OCI-LY7 (cell line): ENCODE measurements at regions of chr17 and their contacts with region 1.

Region 1: DNA sequence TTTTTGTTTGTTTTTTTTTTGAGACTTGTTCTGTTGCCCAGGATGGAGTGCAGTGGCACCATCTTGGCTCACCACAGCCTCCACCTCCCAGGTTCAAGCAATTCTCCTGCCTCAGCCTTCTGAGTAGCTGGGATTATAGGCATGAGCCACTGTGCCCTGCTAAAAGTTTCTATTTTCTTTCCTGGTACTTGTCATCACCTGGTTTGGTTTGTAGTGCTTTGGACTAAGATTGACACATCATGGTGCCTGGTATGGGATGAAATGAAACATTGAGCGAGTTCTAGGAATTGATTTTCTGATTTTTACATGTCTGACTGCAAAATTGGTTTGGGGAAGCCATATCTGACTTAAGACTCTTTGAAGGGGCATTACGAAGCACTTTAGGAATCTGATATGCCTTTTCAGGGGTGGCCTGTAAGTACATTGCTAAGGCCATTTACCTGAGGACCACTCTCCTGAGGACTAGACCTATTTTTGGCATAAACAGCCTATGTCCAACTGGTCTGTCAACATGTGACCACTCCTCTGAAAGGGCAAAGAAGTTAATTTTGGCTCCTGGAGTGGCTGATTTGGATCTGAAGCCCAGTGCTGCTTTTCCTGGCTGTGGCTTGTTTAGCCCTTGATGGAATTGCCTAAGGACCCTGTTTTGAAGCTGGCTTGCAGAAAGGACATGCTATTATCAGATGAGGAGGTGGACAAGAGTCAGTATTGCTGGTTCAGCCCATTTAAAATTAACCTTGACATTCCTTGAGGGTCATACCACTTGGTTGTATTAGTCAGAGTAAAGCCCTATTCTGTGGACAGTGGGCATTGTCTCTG is 18.4 kb upstream of the TBKBP1 start:
- DNase-seq: no peak
- H3K4me3 ChIP-seq: no peak overlapping the region
- H3K27ac ChIP-seq: no peak overlapping the region
- H3K4me1 ChIP-seq: no peaks in the 10 kb centered on the region
- CTCF ChIP-seq: no peak

Region 2: DNA sequence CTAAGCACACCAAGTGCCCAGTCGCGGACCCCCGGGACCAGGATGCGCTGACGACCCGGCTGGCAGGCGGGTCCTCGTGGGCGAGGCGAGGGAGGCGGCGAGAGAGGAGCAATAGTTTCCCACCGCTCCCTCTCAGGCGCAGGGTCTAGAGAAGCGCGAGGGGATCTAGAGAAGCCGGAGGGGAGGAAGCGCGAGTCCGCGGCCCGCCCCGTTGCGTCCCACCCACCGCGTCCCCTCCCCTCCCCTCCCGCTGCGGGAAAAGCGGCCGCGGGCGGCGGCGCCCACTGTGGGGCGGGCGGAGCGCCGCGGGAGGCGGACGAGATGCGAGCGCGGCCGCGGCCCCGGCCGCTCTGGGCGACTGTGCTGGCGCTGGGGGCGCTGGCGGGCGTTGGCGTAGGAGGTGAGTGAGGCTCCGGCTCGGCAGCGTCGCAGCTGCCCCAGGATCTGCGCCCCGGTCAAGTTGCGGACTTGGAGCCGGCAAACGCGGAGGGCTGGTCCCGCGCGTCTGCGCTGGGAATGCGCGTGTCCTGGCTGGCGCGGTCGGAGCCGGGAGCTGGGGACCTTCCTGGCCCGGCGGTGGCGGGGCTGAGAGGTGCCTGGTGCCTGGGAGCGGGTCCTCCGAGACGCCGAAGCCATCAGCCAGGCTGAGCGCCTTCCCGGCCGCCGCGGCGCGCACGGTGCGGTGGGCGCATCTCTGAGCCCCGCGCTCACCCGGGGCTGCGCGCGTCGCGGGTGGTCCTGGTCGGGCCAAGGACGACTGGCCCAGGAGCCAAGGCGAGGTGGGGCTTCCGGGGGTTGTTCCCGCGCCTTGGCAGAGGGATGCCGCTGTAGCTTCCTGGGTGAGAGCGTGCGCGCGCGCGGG is 421.8 kb before region 1 on chr17 and contains the start of gene ITGB3:
- CTCF ChIA-PET with region 1: no interaction called
- POLR2A ChIA-PET with region 1: interaction called, 11 read pairs
- intact Hi-C with region 1: no loop called
- DNase-seq: peak; percentile 81
- H3K4me3 ChIP-seq: peak within 1 kb of the TSS; percentile 69
- H3K27ac ChIP-seq: no peak within 1 kb of the TSS
- H3K4me1 ChIP-seq: peaks cover 9% of the 10 kb centered on the region
- CTCF ChIP-seq: peak; percentile 68
- total RNA-seq, gene ITGB3: not detected in 2 replicates

Region 3: DNA sequence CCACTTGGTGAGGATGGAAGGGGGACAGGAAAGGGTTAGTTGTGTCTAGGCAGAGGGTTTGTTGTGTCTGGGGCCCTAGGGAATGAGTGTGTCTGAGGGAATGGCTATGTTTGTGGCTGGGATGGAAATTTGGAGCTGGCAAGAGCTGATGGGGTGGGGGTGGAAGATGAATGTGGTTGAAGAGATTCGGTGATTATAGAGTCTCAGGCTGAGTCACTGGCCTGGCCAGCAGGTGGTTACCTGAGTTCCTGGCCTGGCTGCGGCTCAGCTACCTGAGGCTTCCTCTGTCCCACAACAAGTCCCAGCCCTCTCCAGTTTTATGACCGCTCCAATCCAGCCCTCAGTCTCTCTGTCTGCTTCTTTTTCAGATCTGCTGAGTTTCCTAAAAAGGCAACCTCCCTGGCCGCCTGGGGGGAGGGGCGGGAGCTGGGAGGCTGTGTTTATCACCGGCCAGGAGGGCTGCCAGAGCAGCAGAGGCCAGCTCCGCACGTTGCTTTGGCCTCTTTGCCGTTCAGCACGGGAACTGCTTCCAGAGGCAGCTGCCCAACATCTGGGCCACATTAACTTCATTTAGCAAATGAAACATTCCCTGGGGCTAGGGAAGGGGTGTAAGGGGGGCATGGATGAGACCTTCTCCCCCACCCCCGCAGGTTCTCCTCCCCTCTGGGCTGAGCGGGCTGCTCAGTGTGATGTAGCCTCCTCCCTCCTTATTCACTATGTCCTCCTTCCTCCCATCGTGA is 400.2 kb before region 1 on chr17:
- CTCF ChIA-PET with region 1: no interaction called
- POLR2A ChIA-PET with region 1: no interaction called
- intact Hi-C with region 1: no loop called
- DNase-seq: no peak
- H3K4me3 ChIP-seq: no peak overlapping the region
- H3K27ac ChIP-seq: no peak overlapping the region
- H3K4me1 ChIP-seq: peaks cover 34% of the 10 kb centered on the region
- CTCF ChIP-seq: no peak

Region 4: DNA sequence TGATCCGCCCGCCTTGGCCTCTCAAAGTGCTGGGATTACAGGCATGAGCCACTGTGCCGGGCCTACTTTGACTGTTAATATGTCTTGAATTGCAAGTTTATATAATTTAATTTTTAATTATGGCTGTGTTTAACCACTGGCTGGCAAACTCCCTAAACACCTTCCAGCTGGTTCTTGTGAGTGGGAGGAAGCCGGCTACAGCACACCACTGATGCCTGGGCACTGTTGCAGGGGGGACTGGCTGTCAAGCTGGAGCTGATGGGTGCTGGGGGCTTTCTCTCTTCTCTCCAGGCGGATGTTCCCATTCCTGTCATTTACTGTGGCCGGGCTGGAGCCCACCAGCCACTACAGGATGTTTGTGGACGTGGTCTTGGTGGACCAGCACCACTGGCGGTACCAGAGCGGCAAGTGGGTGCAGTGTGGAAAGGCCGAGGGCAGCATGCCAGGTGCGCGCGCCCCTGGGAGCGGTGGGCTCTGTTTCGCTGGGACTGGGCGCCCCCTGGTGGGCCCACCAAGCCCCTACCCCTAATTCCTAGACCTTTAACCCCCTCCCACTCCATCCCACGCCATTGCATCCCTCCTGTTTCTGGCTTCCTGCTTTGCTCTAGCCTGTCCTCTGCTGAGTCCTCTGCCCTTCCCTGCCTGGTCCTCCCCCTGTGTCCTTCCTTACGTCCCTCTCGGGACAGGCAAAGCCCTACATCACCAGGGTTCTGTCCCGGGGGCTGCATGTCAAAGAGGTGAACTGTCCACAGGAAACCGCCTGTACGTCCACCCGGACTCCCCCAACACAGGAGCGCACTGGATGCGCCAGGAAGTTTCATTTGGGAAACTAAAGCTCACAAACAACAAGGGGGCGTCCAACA is 67.0 kb after region 1 on chr17:
- CTCF ChIA-PET with region 1: no interaction called
- POLR2A ChIA-PET with region 1: no interaction called
- intact Hi-C with region 1: no loop called
- DNase-seq: peak; percentile 61
- H3K4me3 ChIP-seq: no peak overlapping the region
- H3K27ac ChIP-seq: no peak overlapping the region
- H3K4me1 ChIP-seq: peaks cover 3% of the 10 kb centered on the region
- CTCF ChIP-seq: peak; percentile 86